ENCODE measurements at regions of chr12 and their contacts with region 1.

Region 1: GRCh38 chr12:7188562-7189397 is 706 bp upstream of the PEX5 start:
- DNase-seq: peak; percentile 46
- ATAC-seq: peak; percentile 39
- H3K4me3 Mint-ChIP-seq: peak overlapping the region; percentile 92
- H3K27ac Mint-ChIP-seq: peak overlapping the region; percentile 91
- H3K4me1 Mint-ChIP-seq: peaks cover 31% of the 10 kb centered on the region
- H3K27me3 Mint-ChIP-seq: no peaks in the 10 kb centered on the region
- CTCF ChIP-seq: no peak

Region 2: GRCh38 chr12:6904280-6905278 is 284.2 kb before region 1 on chr12 and contains the start of gene LRRC23:
- CTCF ChIA-PET with region 1: no interaction called
- POLR2A ChIA-PET with region 1: no interaction called
- intact Hi-C with region 1: loop called (anchors 1 kb)
- DNase-seq: peak; percentile 87
- ATAC-seq: peak; percentile 98
- H3K4me3 Mint-ChIP-seq: no peak within 1 kb of the TSS
- H3K27ac Mint-ChIP-seq: no peak within 1 kb of the TSS
- H3K4me1 Mint-ChIP-seq: peaks cover 6% of the 10 kb centered on the region
- H3K27me3 Mint-ChIP-seq: no peaks in the 10 kb centered on the region
- CTCF ChIP-seq: no peak
- total RNA-seq, gene LRRC23: 7.7 and 8.8 TPM in 2 replicates

Region 3: DNA sequence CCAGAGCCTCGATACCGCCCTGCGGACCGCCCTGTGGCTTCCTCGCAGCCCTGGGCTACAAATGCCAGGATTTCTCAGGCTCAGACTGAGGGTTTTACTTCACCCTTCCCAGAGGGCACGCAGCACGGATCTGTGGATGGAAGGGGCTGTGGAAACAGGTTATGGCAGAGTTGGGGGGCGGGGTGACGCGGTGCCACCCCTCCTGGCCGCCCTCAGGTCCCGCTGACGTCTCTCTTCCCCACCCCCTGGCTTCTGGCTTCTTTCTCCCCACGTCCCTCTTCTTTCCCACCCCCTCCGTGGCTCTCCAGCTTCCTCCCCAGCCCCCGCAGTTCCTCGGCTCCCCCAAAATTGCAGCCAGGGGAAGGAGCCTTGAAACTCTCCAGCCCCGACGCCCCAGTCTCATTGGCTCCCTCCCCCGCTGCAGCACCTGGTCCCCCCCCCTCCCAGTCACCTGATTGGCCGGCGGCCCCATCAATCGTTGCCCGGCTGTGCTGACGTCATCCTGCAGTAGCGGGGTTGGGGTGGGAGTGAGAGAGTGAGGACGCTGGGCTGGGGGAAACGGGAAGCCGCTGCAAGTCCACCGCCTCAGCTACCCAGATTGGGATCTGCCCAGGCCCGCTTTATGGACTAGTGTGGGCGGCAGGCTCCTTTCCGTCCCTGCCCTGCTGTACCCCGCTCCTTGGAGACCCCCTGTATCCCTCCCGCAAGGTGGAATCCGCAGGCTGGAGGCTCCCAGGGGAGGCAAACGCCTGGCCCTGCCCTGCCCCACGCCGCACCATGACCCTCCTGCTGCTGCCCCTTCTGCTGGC is 58.7 kb before region 1 on chr12 and contains the start of gene CLSTN3:
- CTCF ChIA-PET with region 1: no interaction called
- POLR2A ChIA-PET with region 1: no interaction called
- intact Hi-C with region 1: loop called (anchors 1 kb)
- DNase-seq: peak; percentile 77
- ATAC-seq: peak; percentile 89
- H3K4me3 Mint-ChIP-seq: peak within 1 kb of the TSS; percentile 93
- H3K27ac Mint-ChIP-seq: peak within 1 kb of the TSS; percentile 80
- H3K4me1 Mint-ChIP-seq: peaks cover 24% of the 10 kb centered on the region
- H3K27me3 Mint-ChIP-seq: no peaks in the 10 kb centered on the region
- CTCF ChIP-seq: no peak
- total RNA-seq, gene CLSTN3: 14.1 and 14.8 TPM in 2 replicates

Region 4: DNA sequence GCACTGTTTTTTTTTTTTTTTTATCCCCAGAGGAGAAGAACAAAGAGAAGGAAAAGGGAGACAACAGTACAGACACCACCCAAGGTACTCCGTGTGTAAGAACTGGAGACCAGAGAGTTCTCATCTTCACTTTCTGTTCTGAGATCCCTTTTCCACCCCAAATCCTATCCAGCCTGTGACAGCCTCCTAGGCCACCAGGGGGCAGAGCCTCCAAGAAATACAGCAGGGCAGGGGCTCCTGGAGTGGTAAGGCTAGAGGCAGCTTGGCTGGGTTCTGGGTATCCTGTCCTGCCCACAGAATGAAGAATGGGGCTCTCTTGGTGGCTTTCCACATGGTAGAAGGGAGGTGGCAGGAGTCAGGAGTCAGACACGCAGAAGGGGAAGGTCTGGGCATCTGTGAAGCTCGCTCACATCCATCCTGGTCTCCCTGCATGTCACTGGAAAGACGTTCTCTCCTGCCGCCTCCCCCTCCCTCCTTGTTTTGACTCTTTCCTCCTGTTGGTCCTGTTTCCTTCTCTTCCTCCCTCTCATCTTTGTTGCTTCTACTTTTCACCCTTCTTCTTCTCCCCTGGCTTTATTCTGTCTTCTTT is 46.6 kb before region 1 on chr12:
- CTCF ChIA-PET with region 1: no interaction called
- POLR2A ChIA-PET with region 1: no interaction called
- intact Hi-C with region 1: loop called (anchors 1 kb)
- DNase-seq: no peak
- ATAC-seq: peak; percentile 54
- H3K4me3 Mint-ChIP-seq: no peak overlapping the region
- H3K27ac Mint-ChIP-seq: no peak overlapping the region
- H3K4me1 Mint-ChIP-seq: no peaks in the 10 kb centered on the region
- H3K27me3 Mint-ChIP-seq: no peaks in the 10 kb centered on the region
- CTCF ChIP-seq: no peak

Region 5: GRCh38 chr12:7304456-7304855 is 115.7 kb after region 1 on chr12:
- CTCF ChIA-PET with region 1: no interaction called
- POLR2A ChIA-PET with region 1: no interaction called
- intact Hi-C with region 1: no loop called
- DNase-seq: no peak
- ATAC-seq: no peak
- H3K4me3 Mint-ChIP-seq: no peak overlapping the region
- H3K27ac Mint-ChIP-seq: no peak overlapping the region
- H3K4me1 Mint-ChIP-seq: no peaks in the 10 kb centered on the region
- H3K27me3 Mint-ChIP-seq: peaks cover 7% of the 10 kb centered on the region
- CTCF ChIP-seq: no peak

Measured in activated B cell treated with CpG ODN at 0.5 μM for 24 hours (primary cell).